IMR-90 (cell line): ENCODE measurements at regions of chr15 and their contacts with region 1.

Region 1: GRCh38 chr15:81274931-81275707 is 48.8 kb downstream of the STARD5 start:
- DNase-seq: peak; percentile 86
- ATAC-seq: peak; percentile 91
- H3K4me3 ChIP-seq: no peak overlapping the region
- H3K27ac ChIP-seq: no peak overlapping the region; the same call in 1 of the 2 replicates
- H3K4me1 ChIP-seq: peaks cover 9% of the 10 kb centered on the region
- H3K27me3 ChIP-seq: no peaks in the 10 kb centered on the region
- CTCF ChIP-seq: peak; percentile 92
- POLR2A ChIP-seq: no peak
- RAD21 ChIP-seq: peak; percentile 98

Region 2: GRCh38 chr15:81091889-81092558 is 183.1 kb before region 1 on chr15:
- CTCF ChIA-PET with region 1: no interaction called
- POLR2A ChIA-PET with region 1: no interaction called
- dilution Hi-C with region 1: no loop called
- in situ Hi-C with region 1: no loop called
- intact Hi-C with region 1: no loop called
- DNase-seq: peak; percentile 97
- ATAC-seq: peak; percentile 98
- H3K4me3 ChIP-seq: no peak overlapping the region
- H3K27ac ChIP-seq: 0 out of 2 replicates have a peak overlapping the region, but pooled peaks have one; percentile 1
- H3K4me1 ChIP-seq: peaks cover 5% of the 10 kb centered on the region
- H3K27me3 ChIP-seq: no peaks in the 10 kb centered on the region
- CTCF ChIP-seq: no peak
- POLR2A ChIP-seq: no peak
- RAD21 ChIP-seq: peak; percentile 19; the same call in 1 of the 2 replicates

Region 3: GRCh38 chr15:81336568-81336967 is 61.4 kb after region 1 on chr15:
- CTCF ChIA-PET with region 1: no interaction called
- POLR2A ChIA-PET with region 1: no interaction called
- dilution Hi-C with region 1: no loop called
- in situ Hi-C with region 1: no loop called
- intact Hi-C with region 1: loop called (anchors 1 kb)
- DNase-seq: peak; percentile 44
- ATAC-seq: no peak
- H3K4me3 ChIP-seq: no peak overlapping the region
- H3K27ac ChIP-seq: no peak overlapping the region
- H3K4me1 ChIP-seq: peaks cover 9% of the 10 kb centered on the region
- H3K27me3 ChIP-seq: no peaks in the 10 kb centered on the region
- CTCF ChIP-seq: peak; percentile 51
- POLR2A ChIP-seq: no peak
- RAD21 ChIP-seq: peak; percentile 54